CD4-positive, alpha-beta T cell (primary cell): ENCODE measurements at regions of chr7 and their contacts with region 1.

Region 1: DNA sequence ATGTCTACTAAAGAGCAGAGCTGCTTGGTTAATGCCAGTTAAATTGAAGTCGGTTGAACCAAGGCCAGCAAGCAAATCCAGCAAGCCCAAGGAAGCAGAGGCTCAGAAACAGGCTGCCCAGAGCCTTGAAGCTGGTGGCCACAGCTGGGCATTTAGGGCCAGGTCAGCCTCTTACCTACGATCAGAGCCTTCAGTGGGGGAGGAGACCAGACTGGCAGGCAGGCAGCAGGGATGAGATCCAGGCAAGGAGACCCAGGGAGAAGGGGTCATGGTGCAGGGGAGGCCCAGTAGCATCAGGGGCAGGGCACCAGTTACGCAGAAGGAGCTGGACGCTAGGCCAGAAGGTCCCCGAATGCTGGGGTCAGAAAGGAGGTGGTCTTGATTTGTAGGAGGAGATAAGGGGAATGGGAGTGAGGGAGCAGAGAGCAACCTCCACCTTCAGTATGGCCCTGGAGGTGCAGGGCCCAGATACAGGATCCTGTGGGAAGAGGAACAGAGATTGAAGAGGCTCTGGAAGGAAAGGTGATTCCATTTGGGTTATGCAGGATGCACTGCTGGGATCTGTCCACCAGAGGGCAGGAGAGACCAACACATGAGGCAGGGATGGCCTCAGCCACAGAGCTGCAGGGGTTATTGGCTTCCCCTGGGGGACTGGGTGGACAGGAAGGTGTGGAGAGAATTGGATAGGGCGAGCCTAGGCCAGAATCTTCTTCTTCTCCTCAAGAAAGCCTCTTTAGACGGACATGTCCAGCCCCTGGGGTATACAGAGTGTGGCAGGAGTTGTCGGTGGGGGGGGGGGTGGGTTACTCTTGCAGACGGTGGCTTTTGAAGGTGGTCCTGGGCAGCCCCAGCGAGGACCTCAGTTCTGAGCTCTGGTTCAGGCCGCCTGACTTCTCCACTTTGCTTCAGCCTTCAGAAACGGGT is 132.6 kb upstream of the PODXL start:
- DNase-seq: peak; percentile 22 to 67 (median 40)
- ATAC-seq: peak; percentile 64
- H3K4me3 ChIP-seq: no peak overlapping the region
- H3K4me3 Mint-ChIP-seq: no peak overlapping the region
- H3K27ac ChIP-seq: no peak overlapping the region
- H3K27ac Mint-ChIP-seq: no peak overlapping the region
- H3K4me1 ChIP-seq: peaks cover 6% of the 10 kb centered on the region
- H3K4me1 Mint-ChIP-seq: no peaks in the 10 kb centered on the region
- H3K27me3 ChIP-seq: peaks cover 6 to 15% of the 10 kb centered on the region in 2 experiments
- H3K27me3 Mint-ChIP-seq: peaks cover 65% of the 10 kb centered on the region
- CTCF ChIP-seq: peak; percentile 73

Region 2: GRCh38 chr7:132580717-132581285 is 891.8 kb after region 1 on chr7:
- CTCF ChIA-PET with region 1: interaction called, 3 read pairs
- POLR2A ChIA-PET with region 1: no interaction called
- intact Hi-C with region 1: loop called in 1 of 2 experiments (anchors 5 kb)
- DNase-seq: peak; percentile 43 to 84 (median 58)
- ATAC-seq: peak; percentile 75
- H3K4me3 ChIP-seq: no peak overlapping the region
- H3K4me3 Mint-ChIP-seq: no peak overlapping the region
- H3K27ac ChIP-seq: no peak overlapping the region
- H3K27ac Mint-ChIP-seq: no peak overlapping the region
- H3K4me1 ChIP-seq: peaks cover 12% of the 10 kb centered on the region
- H3K4me1 Mint-ChIP-seq: peaks cover 12% of the 10 kb centered on the region
- H3K27me3 ChIP-seq: peaks cover 23 to 36% of the 10 kb centered on the region in 2 experiments
- H3K27me3 Mint-ChIP-seq: peaks cover 51% of the 10 kb centered on the region
- CTCF ChIP-seq: peak; percentile 80

Region 3: DNA sequence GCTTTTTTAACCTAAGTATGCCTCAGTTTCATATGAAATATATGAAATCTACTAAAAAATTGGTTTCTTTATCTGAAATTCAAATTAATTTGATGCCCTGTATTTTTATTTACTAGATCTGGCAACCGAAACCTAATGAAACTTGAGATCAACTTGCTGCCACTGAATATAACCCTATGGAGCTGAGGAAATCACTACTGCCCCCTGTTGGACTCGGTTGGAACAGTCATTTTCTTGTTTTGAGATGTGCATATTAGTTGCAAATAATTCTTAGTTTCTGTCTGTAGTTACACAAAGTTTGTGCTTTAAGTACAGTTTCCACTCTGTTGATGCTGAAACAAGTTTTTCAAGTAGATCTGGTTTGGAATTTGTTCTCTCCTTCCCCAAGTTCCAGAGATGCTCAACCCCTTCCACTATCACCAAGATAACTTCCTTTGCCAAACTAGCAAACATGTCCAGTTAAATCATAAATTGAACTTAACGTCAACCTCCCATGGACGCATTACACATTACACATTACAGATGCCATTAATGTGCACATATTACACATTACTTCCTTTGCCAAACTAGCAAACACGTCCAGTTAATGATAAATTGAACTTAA is 1541.7 kb after region 1 on chr7:
- CTCF ChIA-PET with region 1: no interaction called
- POLR2A ChIA-PET with region 1: no interaction called
- intact Hi-C with region 1: loop called in 1 of 2 experiments (anchors 5 kb)
- DNase-seq: peak in 11 of 14 experiments; percentile 1 to 70 (median 28)
- ATAC-seq: no peak
- H3K4me3 ChIP-seq: no peak overlapping the region
- H3K4me3 Mint-ChIP-seq: no peak overlapping the region
- H3K27ac ChIP-seq: no peak overlapping the region
- H3K27ac Mint-ChIP-seq: no peak overlapping the region
- H3K4me1 ChIP-seq: no peaks in the 10 kb centered on the region
- H3K4me1 Mint-ChIP-seq: no peaks in the 10 kb centered on the region
- H3K27me3 ChIP-seq: no peaks in the 10 kb centered on the region
- H3K27me3 Mint-ChIP-seq: no peaks in the 10 kb centered on the region
- CTCF ChIP-seq: peak; percentile 49

Region 4: DNA sequence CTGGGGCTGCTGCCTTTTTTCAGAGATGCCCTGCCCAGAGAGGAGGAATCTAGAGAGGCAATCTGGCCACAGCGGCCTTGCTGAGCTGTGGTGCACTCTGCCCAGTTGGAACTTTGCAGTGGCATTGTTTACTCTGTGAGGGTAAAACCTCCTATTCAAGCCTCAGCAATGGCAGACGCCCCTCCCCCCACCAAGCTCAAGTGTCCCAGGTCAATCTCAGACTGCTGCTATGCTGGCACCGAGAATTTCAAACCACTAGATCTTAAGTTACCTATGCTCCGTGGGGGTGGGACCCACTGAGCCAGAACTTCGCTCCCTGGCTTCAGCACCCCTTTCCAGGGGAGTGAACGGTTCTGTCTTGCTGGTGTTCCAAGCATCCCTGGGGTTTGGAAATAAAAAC is 1641.1 kb after region 1 on chr7:
- CTCF ChIA-PET with region 1: no interaction called
- POLR2A ChIA-PET with region 1: no interaction called
- intact Hi-C with region 1: no loop called
- DNase-seq: no peak
- ATAC-seq: no peak
- H3K4me3 ChIP-seq: no peak overlapping the region
- H3K4me3 Mint-ChIP-seq: no peak overlapping the region
- H3K27ac ChIP-seq: no peak overlapping the region
- H3K27ac Mint-ChIP-seq: no peak overlapping the region
- H3K4me1 ChIP-seq: no peaks in the 10 kb centered on the region
- H3K4me1 Mint-ChIP-seq: peaks cover 20% of the 10 kb centered on the region
- H3K27me3 ChIP-seq: no peaks in the 10 kb centered on the region
- H3K27me3 Mint-ChIP-seq: no peaks in the 10 kb centered on the region
- CTCF ChIP-seq: no peak